Endothelial cell of umbilical vein (primary cell): ENCODE measurements at regions of chr22 and their contacts with region 1.

Region 1: GRCh38 chr22:50620593-50621355 is 7.2 kb downstream of the ARSA start:
- DNase-seq: peak; percentile 90
- H3K4me3 ChIP-seq: no peak overlapping the region
- H3K27ac ChIP-seq: no peak overlapping the region
- H3K4me1 ChIP-seq: peaks cover 14% of the 10 kb centered on the region
- H3K27me3 ChIP-seq: no peaks in the 10 kb centered on the region
- CTCF ChIP-seq: no peak
- POLR2A ChIP-seq: no peak

Region 2: GRCh38 chr22:50376085-50376651 is 244.6 kb before region 1 on chr22:
- CTCF ChIA-PET with region 1: no interaction called
- POLR2A ChIA-PET with region 1: no interaction called
- dilution Hi-C with region 1: no loop called
- intact Hi-C with region 1: no loop called
- DNase-seq: no peak
- H3K4me3 ChIP-seq: no peak overlapping the region
- H3K27ac ChIP-seq: no peak overlapping the region
- H3K4me1 ChIP-seq: no peaks in the 10 kb centered on the region
- H3K27me3 ChIP-seq: no peaks in the 10 kb centered on the region
- CTCF ChIP-seq: no peak
- POLR2A ChIP-seq: no peak

Region 3: DNA sequence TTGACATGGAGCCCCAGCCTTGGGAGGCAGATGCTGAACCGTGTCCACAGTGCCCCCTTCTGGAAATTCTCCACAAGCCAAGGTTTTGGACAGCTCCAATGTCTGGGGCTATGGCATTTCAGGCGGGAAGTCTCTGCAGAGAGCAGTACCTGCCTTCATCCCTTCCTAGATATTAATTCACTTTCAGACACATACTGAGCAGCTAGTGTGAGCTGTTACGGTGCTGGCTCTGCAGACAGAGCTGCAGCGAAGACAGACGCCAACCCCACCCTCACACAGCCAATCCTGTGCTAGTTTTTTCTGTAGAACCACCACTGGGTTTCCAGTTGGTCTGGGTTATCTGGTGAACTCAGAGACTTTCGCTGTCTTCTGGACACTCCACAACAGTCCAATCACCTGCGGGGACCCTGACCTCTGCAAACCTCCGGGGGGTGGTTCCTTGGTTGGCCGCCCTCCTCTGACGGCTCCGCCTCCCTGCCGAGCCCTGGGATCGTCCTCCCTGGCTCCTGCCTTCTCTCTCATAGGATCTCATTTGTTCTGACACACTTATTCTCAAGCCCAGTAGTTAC is 122.4 kb before region 1 on chr22:
- CTCF ChIA-PET with region 1: interaction called, 10 read pairs
- POLR2A ChIA-PET with region 1: no interaction called
- dilution Hi-C with region 1: no loop called
- intact Hi-C with region 1: no loop called
- DNase-seq: peak; percentile 65
- H3K4me3 ChIP-seq: no peak overlapping the region
- H3K27ac ChIP-seq: no peak overlapping the region
- H3K4me1 ChIP-seq: no peaks in the 10 kb centered on the region
- H3K27me3 ChIP-seq: no peaks in the 10 kb centered on the region
- CTCF ChIP-seq: peak; percentile 64 to 71
- POLR2A ChIP-seq: no peak

Region 4: GRCh38 chr22:50530877-50531545 is 89.8 kb before region 1 on chr22:
- CTCF ChIA-PET with region 1: interaction called, 21 read pairs
- POLR2A ChIA-PET with region 1: no interaction called
- dilution Hi-C with region 1: no loop called
- intact Hi-C with region 1: no loop called
- DNase-seq: peak; percentile 27
- H3K4me3 ChIP-seq: no peak overlapping the region
- H3K27ac ChIP-seq: no peak overlapping the region
- H3K4me1 ChIP-seq: peaks cover 23% of the 10 kb centered on the region
- H3K27me3 ChIP-seq: peaks cover 3 to 13% of the 10 kb centered on the region in 2 experiments
- CTCF ChIP-seq: no peak
- POLR2A ChIP-seq: no peak

Region 5: GRCh38 chr22:50576070-50576469 is 44.7 kb before region 1 on chr22:
- CTCF ChIA-PET with region 1: interaction called, 91 read pairs
- POLR2A ChIA-PET with region 1: no interaction called
- dilution Hi-C with region 1: no loop called
- intact Hi-C with region 1: loop called (anchors 1 kb)
- DNase-seq: peak; percentile 68
- H3K4me3 ChIP-seq: no peak overlapping the region
- H3K27ac ChIP-seq: no peak overlapping the region
- H3K4me1 ChIP-seq: no peaks in the 10 kb centered on the region
- H3K27me3 ChIP-seq: no peaks in the 10 kb centered on the region
- CTCF ChIP-seq: peak; percentile 53 to 62
- POLR2A ChIP-seq: no peak

Region 6: DNA sequence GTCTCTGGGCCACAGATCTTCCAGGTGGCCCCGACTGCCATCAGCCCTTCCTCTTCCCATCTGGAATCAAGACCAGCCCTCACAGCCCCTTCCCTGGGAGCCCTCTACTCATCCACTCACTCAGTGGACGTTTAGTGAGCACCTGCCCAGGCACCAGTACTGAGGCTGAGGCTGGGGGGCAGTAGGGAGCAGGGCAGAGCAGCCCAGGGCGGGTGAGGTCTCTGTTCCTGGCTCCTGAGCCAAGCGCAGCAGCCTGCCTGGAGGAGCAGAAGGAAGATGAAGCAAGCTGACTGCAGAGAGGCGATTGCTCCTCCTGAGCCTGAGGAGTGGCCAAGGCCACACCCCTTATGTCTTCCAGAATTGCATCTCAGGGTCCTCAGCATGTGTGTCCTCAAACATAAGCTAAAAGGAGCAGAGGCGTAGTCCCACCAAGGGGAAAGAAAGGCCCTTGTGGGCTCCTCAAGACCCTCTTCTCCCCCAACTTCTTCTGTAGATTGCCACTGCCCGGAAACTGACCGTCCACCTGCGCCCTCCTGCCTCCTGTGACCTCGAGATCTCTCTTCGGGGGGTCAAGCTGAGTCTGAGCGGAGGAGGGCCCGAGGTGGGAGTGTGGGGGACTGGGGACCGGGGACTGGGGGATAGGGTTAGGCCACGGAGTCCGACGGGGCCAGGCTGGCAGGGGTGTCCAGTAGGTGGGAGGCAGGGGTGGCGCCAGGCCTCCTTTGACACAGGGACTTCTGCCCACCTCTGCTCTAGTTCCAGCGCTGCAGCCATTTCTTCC is 14.4 kb before region 1 on chr22:
- CTCF ChIA-PET with region 1: interaction called, 18 read pairs
- POLR2A ChIA-PET with region 1: no interaction called
- dilution Hi-C with region 1: no loop called
- intact Hi-C with region 1: no loop called
- DNase-seq: no peak
- H3K4me3 ChIP-seq: no peak overlapping the region
- H3K27ac ChIP-seq: no peak overlapping the region
- H3K4me1 ChIP-seq: no peaks in the 10 kb centered on the region
- H3K27me3 ChIP-seq: peaks cover 28 to 32% of the 10 kb centered on the region in 2 experiments
- CTCF ChIP-seq: peak in 1 of 2 donors; percentile 20
- POLR2A ChIP-seq: no peak

Region 7: DNA sequence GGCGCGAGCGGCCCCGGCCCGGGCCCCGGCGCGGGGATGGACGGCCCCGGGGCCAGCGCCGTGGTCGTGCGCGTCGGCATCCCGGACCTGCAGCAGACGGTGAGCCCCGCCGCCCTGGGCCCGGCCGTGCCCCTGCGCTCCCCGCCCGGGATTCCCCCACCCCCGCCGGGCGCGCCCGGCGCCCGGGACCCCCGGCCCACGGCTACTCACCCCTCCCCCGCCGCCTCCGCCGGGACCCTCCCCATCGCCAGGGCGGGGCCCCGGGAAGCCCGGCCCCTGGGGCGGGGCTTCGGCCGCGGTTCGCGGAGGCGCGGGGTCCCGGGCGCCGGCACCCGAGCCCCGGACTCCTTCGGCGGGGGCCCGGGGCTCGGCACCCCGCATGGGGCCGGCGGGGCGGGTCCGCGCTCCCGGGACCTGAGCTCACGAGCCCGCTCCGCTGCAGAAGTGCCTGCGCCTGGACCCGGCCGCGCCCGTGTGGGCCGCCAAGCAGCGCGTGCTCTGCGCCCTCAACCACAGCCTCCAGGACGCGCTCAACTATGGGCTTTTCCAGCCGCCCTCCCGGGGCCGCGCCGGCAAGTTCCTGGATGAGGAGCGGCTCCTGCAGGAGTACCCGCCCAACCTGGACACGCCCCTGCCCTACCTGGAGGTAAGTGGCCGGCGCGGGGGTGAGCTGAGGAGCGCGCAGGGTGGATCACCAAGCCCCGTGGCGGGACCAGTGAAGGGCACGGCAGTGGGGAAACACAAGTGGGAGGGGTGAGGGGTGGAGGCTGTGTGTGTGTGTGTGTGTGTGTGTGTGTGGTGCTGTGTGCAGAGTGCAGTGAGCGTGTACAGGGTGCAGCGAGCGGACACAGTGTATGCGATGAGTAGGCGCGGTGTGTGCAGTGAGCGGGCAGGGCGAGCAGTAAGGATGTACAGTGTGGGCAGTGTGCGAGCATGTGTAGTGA is 54.1 kb after region 1 on chr22:
- CTCF ChIA-PET with region 1: interaction called, 22 read pairs
- POLR2A ChIA-PET with region 1: interaction called, 3 read pairs
- dilution Hi-C with region 1: no loop called
- intact Hi-C with region 1: loop called (anchors 2 kb)
- DNase-seq: no peak
- H3K4me3 ChIP-seq: peak overlapping the region; percentile 0 to 74 (median 6)
- H3K27ac ChIP-seq: no peak overlapping the region
- H3K4me1 ChIP-seq: peaks cover 38% of the 10 kb centered on the region
- H3K27me3 ChIP-seq: no peaks in the 10 kb centered on the region
- CTCF ChIP-seq: no peak
- POLR2A ChIP-seq: no peak

Region 8: DNA sequence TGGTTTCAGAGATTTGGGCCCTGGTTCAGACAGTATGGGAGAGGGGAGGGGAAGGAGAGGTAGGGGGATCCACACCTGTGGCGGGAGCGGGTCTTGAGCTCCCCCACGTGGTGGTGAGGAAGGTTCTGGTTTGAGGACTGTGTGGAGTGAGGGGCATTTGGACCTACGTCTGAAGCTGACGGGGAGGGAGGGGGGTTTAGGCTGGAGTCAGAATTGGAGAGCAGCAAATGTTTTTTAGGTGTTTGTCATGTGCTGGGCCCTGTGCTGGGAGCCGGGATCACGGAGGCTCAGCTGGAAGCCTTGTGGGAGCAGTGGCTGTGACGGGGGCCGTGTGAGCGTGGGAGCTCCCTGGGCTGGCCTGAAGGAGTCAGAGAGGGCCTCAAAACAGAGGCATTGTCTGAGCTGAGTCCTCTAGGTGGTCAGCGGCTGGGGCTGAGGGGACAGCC is 79.2 kb after region 1 on chr22:
- CTCF ChIA-PET with region 1: interaction called, 12 read pairs
- POLR2A ChIA-PET with region 1: no interaction called
- dilution Hi-C with region 1: no loop called
- intact Hi-C with region 1: no loop called
- DNase-seq: no peak
- H3K4me3 ChIP-seq: no peak overlapping the region
- H3K27ac ChIP-seq: no peak overlapping the region
- H3K4me1 ChIP-seq: peaks cover 8% of the 10 kb centered on the region
- H3K27me3 ChIP-seq: no peaks in the 10 kb centered on the region
- CTCF ChIP-seq: peak; percentile 8 to 14
- POLR2A ChIP-seq: no peak